CD8-positive, alpha-beta T cell (primary cell): ENCODE measurements at regions of chr9 and their contacts with region 1.

Region 1: GRCh38 chr9:24793787-24794186 is 248.1 kb upstream of the IZUMO3 start:
- DNase-seq: no peak
- ATAC-seq: no peak
- H3K4me3 ChIP-seq: no peak overlapping the region
- H3K4me3 Mint-ChIP-seq: no peak overlapping the region
- H3K27ac ChIP-seq: no peak overlapping the region
- H3K27ac Mint-ChIP-seq: no peak overlapping the region
- H3K4me1 ChIP-seq: no peaks in the 10 kb centered on the region
- H3K4me1 Mint-ChIP-seq: no peaks in the 10 kb centered on the region
- H3K27me3 ChIP-seq: no peaks in the 10 kb centered on the region
- H3K27me3 Mint-ChIP-seq: no peaks in the 10 kb centered on the region
- CTCF ChIP-seq: no peak

Region 2: GRCh38 chr9:24817756-24818155 is 24.0 kb after region 1 on chr9:
- CTCF ChIA-PET with region 1: no interaction called
- POLR2A ChIA-PET with region 1: no interaction called
- intact Hi-C with region 1: loop called in 1 of 2 experiments (anchors 2 kb)
- DNase-seq: no peak
- ATAC-seq: no peak
- H3K4me3 ChIP-seq: no peak overlapping the region
- H3K4me3 Mint-ChIP-seq: no peak overlapping the region
- H3K27ac ChIP-seq: no peak overlapping the region
- H3K27ac Mint-ChIP-seq: no peak overlapping the region
- H3K4me1 ChIP-seq: no peaks in the 10 kb centered on the region
- H3K4me1 Mint-ChIP-seq: no peaks in the 10 kb centered on the region
- H3K27me3 ChIP-seq: no peaks in the 10 kb centered on the region
- H3K27me3 Mint-ChIP-seq: no peaks in the 10 kb centered on the region
- CTCF ChIP-seq: no peak